IMR-90 (cell line): ENCODE measurements at regions of chr6 and their contacts with region 1.

Region 1: GRCh38 chr6:73854998-73855718 is 159.2 kb downstream of the CD109 start:
- DNase-seq: peak; percentile 73
- ATAC-seq: peak; percentile 53; the same call in 1 of the 2 replicates
- H3K4me3 ChIP-seq: no peak overlapping the region
- H3K27ac ChIP-seq: no peak overlapping the region
- H3K4me1 ChIP-seq: peaks cover 4% of the 10 kb centered on the region
- H3K27me3 ChIP-seq: no peaks in the 10 kb centered on the region
- CTCF ChIP-seq: peak; percentile 86
- POLR2A ChIP-seq: no peak
- RAD21 ChIP-seq: peak; percentile 78

Region 2: GRCh38 chr6:73969971-73970970 is 115.1 kb after region 1 on chr6:
- CTCF ChIA-PET with region 1: interaction called, 3 read pairs
- POLR2A ChIA-PET with region 1: no interaction called
- dilution Hi-C with region 1: no loop called
- in situ Hi-C with region 1: no loop called
- intact Hi-C with region 1: loop called (anchors 5 kb)
- DNase-seq: peak; percentile 67
- ATAC-seq: peak; percentile 66
- H3K4me3 ChIP-seq: no peak overlapping the region
- H3K27ac ChIP-seq: no peak overlapping the region
- H3K4me1 ChIP-seq: peaks cover 2% of the 10 kb centered on the region; the same call in 1 of the 2 replicates
- H3K27me3 ChIP-seq: no peaks in the 10 kb centered on the region
- CTCF ChIP-seq: peak; percentile 75
- POLR2A ChIP-seq: no peak
- RAD21 ChIP-seq: peak; percentile 68